ENCODE measurements at regions of chr7 and their contacts with region 1.

Region 1: DNA sequence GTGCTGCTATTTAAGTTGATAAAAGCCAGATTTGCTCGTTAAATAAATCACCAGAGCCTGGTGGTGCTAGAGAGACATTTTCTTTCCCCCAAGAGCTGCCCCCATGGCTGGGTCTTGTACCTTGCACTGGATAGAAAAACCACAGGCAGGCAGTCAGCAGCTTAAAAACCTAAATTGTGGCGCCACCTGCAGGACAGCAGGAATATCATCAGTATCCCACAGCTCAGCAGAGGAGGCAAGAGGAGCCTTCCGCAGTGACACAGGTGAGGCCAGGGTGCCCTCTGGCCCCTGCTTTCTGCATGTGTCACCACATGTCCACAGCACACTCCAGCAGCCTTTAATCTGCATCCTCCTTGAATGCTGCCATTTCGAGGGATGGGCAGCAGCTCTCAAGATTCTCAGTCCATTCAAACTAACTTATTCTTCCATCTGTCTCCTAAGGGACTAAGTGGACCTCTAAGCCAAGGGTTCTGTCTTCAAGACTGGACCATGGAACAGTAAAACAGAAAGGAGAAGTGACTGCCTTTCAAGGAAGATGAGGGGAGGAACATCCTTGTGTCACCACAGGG is 4.5 kb upstream of the PLXNA4 start:
- DNase-seq: peak; percentile 38
- H3K27ac ChIP-seq: no peak overlapping the region
- CTCF ChIP-seq: peak; percentile 82

Region 2: DNA sequence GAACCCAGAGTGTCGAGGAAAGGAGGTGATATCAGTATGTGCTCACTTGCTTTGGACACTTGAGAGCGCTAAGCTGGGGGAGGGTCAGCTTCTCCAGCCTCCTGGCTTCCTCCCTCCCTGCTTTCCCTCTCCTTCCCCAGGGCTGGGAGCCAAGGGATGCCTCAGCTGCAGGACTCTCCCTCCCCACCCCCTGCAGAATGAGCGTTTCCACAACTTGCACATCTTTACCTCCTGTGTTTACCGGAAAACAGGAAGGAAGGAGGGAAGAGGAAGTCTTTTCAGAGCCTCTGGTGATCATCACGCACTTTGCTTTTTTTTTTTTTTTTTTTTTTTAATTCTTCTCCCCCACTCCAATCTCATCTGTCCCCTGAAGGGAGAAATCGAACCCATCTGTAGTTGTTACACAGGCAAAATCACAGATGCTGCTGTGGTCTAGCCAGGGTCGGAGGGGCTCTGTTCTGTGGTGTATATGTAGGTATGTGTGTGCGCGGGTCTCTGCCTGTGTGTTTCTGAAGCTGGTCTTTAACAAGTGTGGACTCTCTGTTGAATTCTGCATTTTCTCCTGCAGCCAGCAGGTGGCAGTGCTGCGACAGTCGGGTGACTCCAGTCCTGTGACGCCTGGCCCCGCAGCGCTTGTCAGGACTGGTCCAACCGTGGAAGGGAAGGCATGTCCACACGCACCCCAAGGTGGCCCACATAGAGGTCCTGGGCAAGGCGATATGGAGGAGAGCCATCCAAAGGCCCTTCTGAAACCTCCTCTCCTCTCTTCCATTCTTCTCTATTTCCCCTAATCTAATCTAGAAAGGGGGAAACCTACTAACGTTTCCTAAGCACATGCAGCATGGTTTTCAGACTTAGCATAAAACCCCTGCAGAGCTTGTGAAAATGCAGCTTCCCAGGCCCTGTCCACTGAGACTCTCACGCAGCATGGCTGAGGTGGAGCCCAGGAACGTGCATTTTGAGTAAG is 262.2 kb before region 1 on chr7:
- CTCF ChIA-PET with region 1: interaction called, 15 read pairs
- POLR2A ChIA-PET with region 1: no interaction called
- DNase-seq: peak; percentile 82
- H3K27ac ChIP-seq: no peak overlapping the region
- CTCF ChIP-seq: peak; percentile 92

Region 3: DNA sequence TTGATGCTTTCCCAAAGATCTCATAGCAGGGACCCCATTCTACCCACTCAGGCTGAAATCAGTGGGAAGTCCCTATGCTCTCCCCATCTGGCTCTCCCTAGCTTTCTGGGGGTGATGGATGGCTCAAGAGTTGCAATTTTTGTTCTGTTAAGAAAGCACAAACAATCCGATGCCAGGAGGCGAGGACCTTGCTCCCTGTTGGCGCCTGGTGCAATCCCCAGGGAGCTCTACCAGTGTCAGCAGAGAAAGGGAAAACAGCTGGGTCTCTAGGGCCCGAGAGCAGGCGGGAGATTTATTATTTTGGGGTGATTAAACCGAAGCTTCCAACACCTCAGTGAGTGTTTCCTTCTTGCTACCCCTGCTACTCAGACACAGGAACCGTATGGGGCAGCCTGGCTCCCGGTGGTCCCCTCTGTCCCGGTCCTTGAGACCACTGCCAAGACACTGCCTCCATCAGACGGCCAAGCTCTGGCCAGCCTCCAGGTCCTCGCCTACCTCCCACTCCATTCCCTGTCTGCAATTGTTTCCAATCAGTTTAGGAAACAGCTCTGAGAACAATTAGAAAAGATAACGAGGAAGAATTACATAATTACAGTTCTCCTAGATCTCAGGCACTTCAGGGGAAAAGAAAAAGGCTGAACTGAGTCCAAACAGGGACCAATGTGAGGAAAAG is 152.4 kb before region 1 on chr7:
- CTCF ChIA-PET with region 1: interaction called, 10 read pairs
- POLR2A ChIA-PET with region 1: no interaction called
- DNase-seq: no peak
- H3K27ac ChIP-seq: no peak overlapping the region
- CTCF ChIP-seq: no peak